Activated B cell treated with CpG ODN at 0.5 μM for 24 hours (primary cell): ENCODE measurements at regions of chr20 and their contacts with region 1.

Region 1: GRCh38 chr20:37534401-37535157 is 6.9 kb upstream of the BLCAP start:
- DNase-seq: no peak
- ATAC-seq: peak; percentile 99
- H3K4me3 Mint-ChIP-seq: no peak overlapping the region
- H3K27ac Mint-ChIP-seq: peak overlapping the region; percentile 38
- H3K4me1 Mint-ChIP-seq: peaks cover 9% of the 10 kb centered on the region
- H3K27me3 Mint-ChIP-seq: peaks cover 10% of the 10 kb centered on the region
- CTCF ChIP-seq: peak; percentile 38

Region 2: GRCh38 chr20:36988494-36988966 is 546.0 kb before region 1 on chr20:
- CTCF ChIA-PET with region 1: no interaction called
- POLR2A ChIA-PET with region 1: no interaction called
- intact Hi-C with region 1: no loop called
- DNase-seq: no peak
- ATAC-seq: no peak
- H3K4me3 Mint-ChIP-seq: no peak overlapping the region
- H3K27ac Mint-ChIP-seq: no peak overlapping the region
- H3K4me1 Mint-ChIP-seq: peaks cover 21% of the 10 kb centered on the region
- H3K27me3 Mint-ChIP-seq: no peaks in the 10 kb centered on the region
- CTCF ChIP-seq: no peak

Region 3: GRCh38 chr20:37007898-37008649 is 526.5 kb before region 1 on chr20:
- CTCF ChIA-PET with region 1: interaction called, 3 read pairs
- POLR2A ChIA-PET with region 1: no interaction called
- intact Hi-C with region 1: loop called (anchors 5 kb)
- DNase-seq: no peak
- ATAC-seq: peak; percentile 26
- H3K4me3 Mint-ChIP-seq: peak overlapping the region; percentile 17
- H3K27ac Mint-ChIP-seq: peak overlapping the region; percentile 69
- H3K4me1 Mint-ChIP-seq: peaks cover 45% of the 10 kb centered on the region
- H3K27me3 Mint-ChIP-seq: no peaks in the 10 kb centered on the region
- CTCF ChIP-seq: no peak

Region 4: GRCh38 chr20:37192137-37192854 is 342.3 kb before region 1 on chr20:
- CTCF ChIA-PET with region 1: interaction called, 79 read pairs
- POLR2A ChIA-PET with region 1: interaction called, 9 read pairs
- intact Hi-C with region 1: loop called (anchors 1 kb)
- DNase-seq: peak; percentile 46
- ATAC-seq: peak; percentile 84
- H3K4me3 Mint-ChIP-seq: no peak overlapping the region
- H3K27ac Mint-ChIP-seq: no peak overlapping the region
- H3K4me1 Mint-ChIP-seq: peaks cover 57% of the 10 kb centered on the region
- H3K27me3 Mint-ChIP-seq: no peaks in the 10 kb centered on the region
- CTCF ChIP-seq: peak; percentile 54

Region 5: GRCh38 chr20:37202267-37202943 is 332.2 kb before region 1 on chr20:
- CTCF ChIA-PET with region 1: interaction called, 79 read pairs
- POLR2A ChIA-PET with region 1: no interaction called
- intact Hi-C with region 1: loop called (anchors 1 kb)
- DNase-seq: no peak
- ATAC-seq: no peak
- H3K4me3 Mint-ChIP-seq: no peak overlapping the region
- H3K27ac Mint-ChIP-seq: no peak overlapping the region
- H3K4me1 Mint-ChIP-seq: no peaks in the 10 kb centered on the region
- H3K27me3 Mint-ChIP-seq: no peaks in the 10 kb centered on the region
- CTCF ChIP-seq: peak; percentile 66

Region 6: GRCh38 chr20:37408302-37409193 is 126.0 kb before region 1 on chr20:
- CTCF ChIA-PET with region 1: interaction called, 3 read pairs
- POLR2A ChIA-PET with region 1: no interaction called
- intact Hi-C with region 1: loop called (anchors 1 kb)
- DNase-seq: no peak
- ATAC-seq: no peak
- H3K4me3 Mint-ChIP-seq: no peak overlapping the region
- H3K27ac Mint-ChIP-seq: no peak overlapping the region
- H3K4me1 Mint-ChIP-seq: peaks cover 29% of the 10 kb centered on the region
- H3K27me3 Mint-ChIP-seq: peaks cover 11% of the 10 kb centered on the region
- CTCF ChIP-seq: no peak

Region 7: DNA sequence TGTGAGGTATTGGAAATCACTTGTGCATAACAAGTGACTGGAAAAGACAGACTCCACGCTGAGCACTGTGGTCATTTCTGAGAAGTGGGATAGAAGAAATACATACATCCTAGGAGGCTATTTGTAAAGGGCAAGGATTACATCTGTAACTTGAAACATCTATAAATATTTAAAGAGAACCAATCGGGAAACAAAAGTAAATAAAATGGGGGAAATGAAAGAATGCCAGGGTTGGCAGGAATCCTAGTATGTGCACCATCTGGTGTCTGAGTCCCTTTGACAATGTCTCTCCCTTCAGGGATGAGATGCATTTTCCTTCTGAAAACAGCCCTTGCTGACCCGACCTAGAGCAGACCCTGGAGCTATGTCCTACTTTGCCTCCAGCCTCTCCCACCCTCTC is 421.5 kb after region 1 on chr20:
- CTCF ChIA-PET with region 1: no interaction called
- POLR2A ChIA-PET with region 1: no interaction called
- intact Hi-C with region 1: no loop called
- DNase-seq: no peak
- ATAC-seq: no peak
- H3K4me3 Mint-ChIP-seq: no peak overlapping the region
- H3K27ac Mint-ChIP-seq: no peak overlapping the region
- H3K4me1 Mint-ChIP-seq: no peaks in the 10 kb centered on the region
- H3K27me3 Mint-ChIP-seq: peaks cover 13% of the 10 kb centered on the region
- CTCF ChIP-seq: no peak